Activated CD4-positive, alpha-beta T cell treated with anti-CD3 and anti-CD28 coated beads for 36 hours (primary cell): ENCODE measurements at regions of chr3 and their contacts with region 1.

Region 1: GRCh38 chr3:78645628-78646310 is 1122.0 kb downstream of the ROBO1 start:
- DNase-seq: no peak
- ATAC-seq: no peak
- H3K4me3 Mint-ChIP-seq: no peak overlapping the region
- H3K27ac Mint-ChIP-seq: no peak overlapping the region
- H3K4me1 Mint-ChIP-seq: no peaks in the 10 kb centered on the region
- H3K27me3 Mint-ChIP-seq: no peaks in the 10 kb centered on the region

Region 2: GRCh38 chr3:77038468-77038929 is 1607.3 kb before region 1 on chr3:
- CTCF ChIA-PET with region 1: no interaction called
- POLR2A ChIA-PET with region 1: no interaction called
- intact Hi-C with region 1: loop called (anchors 5 to 10 kb)
- DNase-seq: peak; percentile 36
- ATAC-seq: no peak
- H3K4me3 Mint-ChIP-seq: no peak overlapping the region
- H3K27ac Mint-ChIP-seq: no peak overlapping the region
- H3K4me1 Mint-ChIP-seq: peaks cover 2% of the 10 kb centered on the region
- H3K27me3 Mint-ChIP-seq: peaks cover 30% of the 10 kb centered on the region

Region 3: DNA sequence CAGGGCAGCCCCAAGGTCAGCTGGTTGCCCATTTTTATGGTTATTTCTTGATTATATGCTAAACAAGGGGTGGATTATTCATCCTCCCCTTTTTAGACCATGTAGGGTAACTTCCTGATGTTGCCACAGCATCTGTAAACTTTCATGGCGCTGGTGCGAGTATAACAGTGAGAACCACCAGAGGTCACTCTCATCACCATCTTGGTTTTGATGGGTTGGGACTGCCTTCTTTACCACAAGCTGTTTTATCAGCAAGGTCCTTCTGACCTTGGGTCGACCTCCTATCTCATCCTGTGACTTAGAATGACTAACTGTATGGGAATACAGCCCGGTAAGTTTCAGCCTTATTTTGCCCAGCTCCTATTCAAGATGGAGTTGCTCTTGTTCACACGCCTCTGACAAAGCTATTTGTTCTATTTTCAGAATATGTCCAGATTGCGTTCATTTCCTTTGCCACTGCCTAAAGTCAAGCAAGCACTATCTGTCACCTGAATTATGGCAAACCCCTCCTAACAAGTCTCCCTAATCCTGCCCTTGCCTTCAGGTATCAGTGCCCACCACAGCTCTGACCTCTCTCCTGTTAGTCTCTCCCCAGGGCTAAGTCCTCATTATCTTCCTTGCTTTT is 1297.4 kb before region 1 on chr3:
- CTCF ChIA-PET with region 1: no interaction called
- POLR2A ChIA-PET with region 1: no interaction called
- intact Hi-C with region 1: loop called in 1 of 2 experiments (anchors 10 kb)
- DNase-seq: no peak
- ATAC-seq: no peak
- H3K4me3 Mint-ChIP-seq: no peak overlapping the region
- H3K27ac Mint-ChIP-seq: no peak overlapping the region
- H3K4me1 Mint-ChIP-seq: no peaks in the 10 kb centered on the region
- H3K27me3 Mint-ChIP-seq: no peaks in the 10 kb centered on the region

Region 4: GRCh38 chr3:78277801-78278200 is 368.0 kb before region 1 on chr3:
- CTCF ChIA-PET with region 1: no interaction called
- POLR2A ChIA-PET with region 1: no interaction called
- intact Hi-C with region 1: loop called in 1 of 2 experiments (anchors 10 kb)
- DNase-seq: no peak
- ATAC-seq: no peak
- H3K4me3 Mint-ChIP-seq: no peak overlapping the region
- H3K27ac Mint-ChIP-seq: no peak overlapping the region
- H3K4me1 Mint-ChIP-seq: no peaks in the 10 kb centered on the region
- H3K27me3 Mint-ChIP-seq: no peaks in the 10 kb centered on the region

Region 5: DNA sequence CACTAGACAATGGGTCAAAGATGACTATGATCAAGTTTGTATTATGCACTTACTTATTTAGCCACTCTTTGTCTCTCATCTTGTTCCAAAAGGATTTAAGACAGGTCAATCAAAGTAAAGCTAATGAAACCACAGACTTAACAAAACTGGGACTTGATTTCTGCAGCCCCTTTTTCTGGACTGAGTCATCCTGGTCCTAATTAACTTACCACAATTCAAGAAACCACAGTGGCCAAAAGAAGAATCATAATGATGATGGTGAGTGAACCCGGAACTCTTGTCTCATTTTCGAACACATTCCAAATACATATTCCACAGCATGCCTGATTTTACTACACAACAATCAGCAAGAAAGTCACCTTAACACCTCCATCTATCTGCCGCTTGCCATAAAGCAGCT is 211.0 kb before region 1 on chr3:
- CTCF ChIA-PET with region 1: no interaction called
- POLR2A ChIA-PET with region 1: no interaction called
- intact Hi-C with region 1: loop called in 1 of 2 experiments (anchors 10 kb)
- DNase-seq: no peak
- ATAC-seq: no peak
- H3K4me3 Mint-ChIP-seq: no peak overlapping the region
- H3K27ac Mint-ChIP-seq: no peak overlapping the region
- H3K4me1 Mint-ChIP-seq: no peaks in the 10 kb centered on the region
- H3K27me3 Mint-ChIP-seq: no peaks in the 10 kb centered on the region

Region 6: DNA sequence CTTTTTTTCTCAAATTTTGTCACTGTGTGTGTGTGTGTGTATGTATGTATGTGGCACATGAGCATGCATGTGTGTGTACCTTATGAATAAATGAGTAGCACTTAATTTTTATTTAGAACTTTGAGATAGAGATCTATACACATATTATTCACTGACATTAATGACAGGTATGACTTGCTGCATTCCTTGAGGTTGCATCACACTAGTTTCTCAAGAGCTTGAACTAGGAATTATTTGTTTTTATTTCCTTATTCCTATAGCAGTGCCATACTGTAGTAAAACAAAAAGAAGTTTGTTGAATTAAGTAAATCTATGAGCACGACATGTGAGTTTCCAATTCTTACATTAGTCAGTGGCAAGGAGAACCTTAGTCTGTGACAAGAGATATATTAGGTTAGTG is 178.1 kb after region 1 on chr3:
- CTCF ChIA-PET with region 1: no interaction called
- POLR2A ChIA-PET with region 1: no interaction called
- intact Hi-C with region 1: no loop called
- DNase-seq: no peak
- ATAC-seq: no peak
- H3K4me3 Mint-ChIP-seq: no peak overlapping the region
- H3K27ac Mint-ChIP-seq: no peak overlapping the region
- H3K4me1 Mint-ChIP-seq: no peaks in the 10 kb centered on the region
- H3K27me3 Mint-ChIP-seq: no peaks in the 10 kb centered on the region